IMR-90 (cell line): ENCODE measurements at regions of chrX and their contacts with region 1.

Region 1: DNA sequence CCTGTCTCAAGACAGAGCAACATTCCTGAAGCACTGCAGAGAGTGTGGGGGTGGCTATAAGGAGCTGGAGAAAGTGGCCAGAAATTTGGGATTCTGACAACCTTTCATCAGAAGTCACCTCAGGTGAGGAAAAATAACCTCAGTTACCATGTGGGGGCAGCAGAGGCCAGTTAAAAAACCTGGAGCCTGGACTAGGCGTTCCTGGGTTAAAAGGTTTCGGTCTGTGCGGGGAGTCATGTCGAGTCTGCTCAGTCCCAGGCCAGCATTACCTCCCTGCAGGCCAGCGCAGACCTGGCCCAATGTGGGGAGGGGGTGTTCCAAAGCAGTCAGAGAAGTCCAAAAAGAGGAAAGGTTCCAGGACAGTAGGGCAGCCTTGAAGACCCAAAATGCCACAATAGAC is 10.9 kb upstream of the NALF2 start:
- DNase-seq: no peak
- ATAC-seq: no peak
- H3K4me3 ChIP-seq: no peak overlapping the region
- H3K27ac ChIP-seq: no peak overlapping the region
- H3K4me1 ChIP-seq: no peaks in the 10 kb centered on the region
- H3K27me3 ChIP-seq: peaks cover 19% of the 10 kb centered on the region
- CTCF ChIP-seq: peak; percentile 30
- POLR2A ChIP-seq: no peak
- RAD21 ChIP-seq: peak; percentile 23; the same call in 1 of the 2 replicates

Region 2: DNA sequence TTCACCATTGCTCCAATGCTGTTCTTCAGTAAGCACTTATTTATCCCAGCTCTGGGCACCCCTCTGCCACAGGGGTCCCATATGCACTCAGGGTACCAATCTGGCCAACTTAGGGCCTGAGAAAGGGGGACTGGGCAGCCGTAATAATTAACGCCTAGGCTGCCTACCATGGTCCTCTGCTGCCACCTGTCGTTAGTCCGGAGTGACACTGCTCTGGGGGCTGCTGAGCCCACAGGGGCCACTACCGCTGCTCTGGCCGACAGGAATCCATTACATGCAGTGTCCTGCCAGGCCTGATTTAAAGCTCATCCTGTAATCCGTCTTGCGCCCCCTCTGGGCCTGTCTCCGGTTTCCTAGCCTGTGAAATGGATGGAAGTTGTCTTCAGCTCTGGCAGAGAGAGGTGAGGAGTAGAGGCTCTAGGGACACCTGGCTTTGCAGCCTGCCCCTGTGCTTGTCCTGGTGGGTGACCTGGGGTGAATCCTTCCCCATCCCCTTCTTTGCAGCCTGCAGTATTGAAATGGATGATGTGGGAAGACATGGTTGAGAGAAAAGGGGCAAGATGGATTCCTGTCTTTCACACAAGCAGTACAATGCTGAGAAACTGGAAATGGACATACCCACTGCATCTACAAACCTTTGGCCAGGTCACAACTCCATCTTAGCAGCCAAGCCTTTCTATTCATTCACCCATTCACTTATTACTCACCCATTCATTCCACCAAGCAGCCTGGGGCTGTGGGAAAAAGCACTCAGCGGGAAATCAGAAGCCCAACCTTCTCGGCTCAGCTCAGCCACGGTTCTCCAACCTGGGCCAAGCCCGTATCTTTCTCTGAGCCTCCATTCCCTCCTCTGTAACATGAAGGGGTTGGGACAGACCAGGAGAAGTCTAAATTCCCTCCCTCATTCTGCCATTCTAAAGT is 105.4 kb before region 1 on chrX:
- CTCF ChIA-PET with region 1: no interaction called
- POLR2A ChIA-PET with region 1: no interaction called
- dilution Hi-C with region 1: no loop called
- in situ Hi-C with region 1: loop called (anchors 25 kb)
- intact Hi-C with region 1: no loop called
- DNase-seq: peak; percentile 21
- ATAC-seq: peak; percentile 85
- H3K4me3 ChIP-seq: no peak overlapping the region
- H3K27ac ChIP-seq: no peak overlapping the region
- H3K4me1 ChIP-seq: no peaks in the 10 kb centered on the region
- H3K27me3 ChIP-seq: peaks cover 56% of the 10 kb centered on the region
- CTCF ChIP-seq: peak; percentile 66
- POLR2A ChIP-seq: no peak
- RAD21 ChIP-seq: peak; percentile 72